ENCODE measurements at regions of chr19 and their contacts with region 1.

Region 1: GRCh38 chr19:46265217-46265828 is 31.5 kb upstream of the HIF3A start:
- DNase-seq: no peak

Region 2: DNA sequence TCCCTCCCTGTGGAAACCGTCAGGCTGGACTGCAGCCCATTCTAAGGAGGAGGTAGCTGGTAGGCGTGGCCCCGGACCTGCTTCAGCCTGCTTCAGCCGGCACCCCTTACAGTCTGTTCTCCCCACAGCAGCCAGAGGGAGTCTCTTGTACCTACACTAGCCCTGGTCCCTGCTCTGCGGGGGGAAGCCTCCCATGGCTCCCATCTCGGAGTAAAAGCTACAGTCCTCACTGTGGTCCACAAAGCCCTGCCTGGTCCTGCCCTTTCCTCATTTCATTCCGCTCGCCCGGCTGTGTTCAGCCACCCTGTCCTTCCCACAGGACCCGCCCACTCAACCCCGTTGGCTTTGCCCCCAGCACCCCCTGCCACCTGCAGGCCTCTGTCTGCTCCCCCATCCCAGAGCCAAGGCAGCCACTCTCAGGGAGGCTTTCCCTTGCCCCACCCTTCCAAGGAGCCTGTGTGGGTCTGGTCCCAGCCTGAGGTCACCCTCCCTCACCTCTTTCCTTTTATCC is 243.7 kb before region 1 on chr19:
- intact Hi-C with region 1: loop called (anchors 5 to 10 kb)
- DNase-seq: peak; percentile 64

Region 3: DNA sequence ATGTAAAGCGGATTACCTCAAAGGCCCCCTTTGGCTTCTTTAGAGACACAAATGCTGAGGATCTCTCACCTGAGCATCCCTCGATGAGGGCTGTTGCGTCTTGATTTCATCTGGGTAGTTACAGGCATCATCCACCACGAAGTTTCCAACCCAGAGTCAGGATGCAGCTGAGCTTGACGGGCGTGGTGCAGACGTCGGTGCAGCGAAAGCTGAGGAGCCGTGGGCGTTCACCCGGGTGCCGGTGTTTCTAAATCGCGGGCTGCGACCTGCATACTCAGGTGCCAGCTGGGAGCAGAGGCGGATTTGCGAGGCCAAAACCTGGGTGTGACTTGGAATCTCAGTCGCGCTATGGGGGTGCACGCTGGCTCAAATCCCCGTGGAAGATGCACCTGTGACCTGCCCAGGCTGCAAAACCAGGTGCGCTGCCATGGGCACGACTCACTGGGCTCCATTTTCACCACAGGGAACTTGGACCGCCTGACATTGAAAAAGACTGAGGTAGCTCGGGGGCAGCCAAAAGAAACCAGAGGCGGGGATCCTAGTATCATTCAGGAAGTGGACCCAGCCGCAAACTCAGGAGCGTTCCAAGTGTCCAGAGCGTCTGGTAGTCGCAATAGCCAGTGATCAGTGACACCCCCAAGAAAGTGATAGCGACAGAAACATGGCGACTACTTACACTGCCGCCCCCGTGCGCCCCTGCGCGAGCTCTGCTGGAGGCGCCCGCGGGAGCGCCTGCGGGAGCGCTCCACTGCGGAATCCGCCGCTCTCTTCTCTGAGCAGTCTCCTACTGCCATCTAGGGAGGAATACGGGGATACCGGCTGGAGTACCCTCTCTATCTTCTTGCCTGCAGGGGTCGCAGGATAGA is 188.1 kb before region 1 on chr19:
- intact Hi-C with region 1: loop called (anchors 5 kb)
- DNase-seq: no peak

Region 4: GRCh38 chr19:46254776-46255175 is 10.5 kb before region 1 on chr19:
- intact Hi-C with region 1: no loop called
- DNase-seq: no peak